ENCODE measurements at regions of chr17 and their contacts with region 1.

Region 1: DNA sequence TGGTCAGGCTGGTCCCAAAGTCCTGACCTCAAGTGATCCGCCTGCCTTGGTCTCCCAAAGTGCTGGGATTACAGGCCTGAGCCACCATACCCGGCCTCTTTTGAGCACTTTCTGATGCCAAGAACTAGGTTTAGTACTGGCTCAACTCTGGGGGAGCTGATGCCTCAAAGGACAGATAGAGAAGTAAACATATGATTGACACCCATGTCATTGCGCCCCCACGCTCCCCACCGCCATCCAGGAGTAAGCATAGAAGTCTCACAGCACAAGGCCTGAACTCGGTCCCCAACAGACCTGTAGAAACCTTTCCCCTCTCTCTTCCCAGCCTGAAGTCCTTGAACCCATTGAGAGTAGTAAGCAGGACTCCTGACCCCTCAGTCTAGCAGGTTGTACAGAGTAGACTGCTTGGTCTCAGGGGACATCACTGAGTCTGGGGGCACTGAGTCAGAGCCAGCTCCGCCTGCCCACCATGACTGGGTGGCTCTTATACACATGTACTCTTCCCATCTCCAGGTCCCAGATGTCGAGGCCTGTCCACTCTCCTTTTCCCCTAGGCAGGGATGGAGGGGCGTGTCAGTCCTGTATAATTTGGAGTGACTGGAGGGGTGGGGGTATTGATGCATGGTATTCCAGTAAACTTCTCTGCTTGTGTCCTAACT is 23.3 kb downstream of the LIG3 start:
- DNase-seq: no peak

Region 2: DNA sequence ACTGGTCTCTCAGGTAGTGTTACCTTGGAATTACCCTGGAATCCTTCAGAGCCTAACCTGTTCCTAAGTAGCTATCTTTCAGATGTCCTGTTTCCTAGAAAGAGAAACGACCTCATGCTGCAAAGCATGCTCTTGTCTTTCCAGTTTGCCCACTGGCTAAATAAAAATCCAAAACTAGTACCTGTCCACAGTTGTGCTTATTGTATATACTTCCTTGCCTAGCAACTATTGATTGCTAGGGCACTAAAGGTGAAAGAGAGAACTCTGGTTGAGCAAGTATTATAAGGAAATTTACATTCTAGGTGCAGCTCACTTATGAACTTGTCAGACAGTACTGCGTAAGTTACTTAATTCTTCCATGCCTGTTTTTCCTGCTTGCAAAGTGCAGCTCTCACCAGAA is 15.2 kb after region 1 on chr17:
- intact Hi-C with region 1: loop called in 1 of 2 experiments (anchors 2 kb)
- DNase-seq: no peak

Measured in posterior vena cava (tissue), 2 donors.